MCF 10A (cell line): ENCODE measurements at regions of chr16 and their contacts with region 1.

Region 1: GRCh38 chr16:75110637-75111513 is 5.7 kb downstream of the LDHD start:
- DNase-seq: peak; percentile 92
- H3K4me3 Mint-ChIP-seq: peak overlapping the region; percentile 67
- H3K27ac Mint-ChIP-seq: peak overlapping the region; percentile 76
- H3K4me1 Mint-ChIP-seq: peaks cover 29% of the 10 kb centered on the region
- H3K27me3 Mint-ChIP-seq: no peaks in the 10 kb centered on the region
- CTCF ChIP-seq: peak; percentile 88

Region 2: DNA sequence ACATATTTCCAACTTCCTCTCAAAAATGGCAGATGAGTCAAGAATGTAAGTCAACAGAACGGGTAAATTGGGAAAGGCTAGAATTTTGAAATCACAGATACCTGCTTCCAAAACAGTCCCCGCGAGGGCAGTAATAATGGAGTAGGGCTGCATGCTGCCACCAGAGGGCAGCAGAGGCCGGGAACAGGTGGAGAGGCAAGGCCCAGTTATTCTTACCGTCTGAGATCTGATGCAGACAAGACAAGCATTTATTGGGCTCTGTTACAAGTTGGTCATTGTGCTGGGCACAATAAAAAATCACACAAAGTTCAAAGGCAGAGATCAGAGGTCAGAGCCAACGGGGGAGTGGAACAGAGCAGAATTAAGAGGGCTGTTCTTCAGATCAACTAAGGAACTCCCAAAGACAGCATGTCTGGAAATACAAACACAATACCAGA is 401.4 kb before region 1 on chr16:
- CTCF ChIA-PET with region 1: interaction called, 10 read pairs
- POLR2A ChIA-PET with region 1: no interaction called
- intact Hi-C with region 1: loop called (anchors 1 kb)
- DNase-seq: peak; percentile 91
- H3K4me3 Mint-ChIP-seq: no peak overlapping the region
- H3K27ac Mint-ChIP-seq: no peak overlapping the region
- H3K4me1 Mint-ChIP-seq: no peaks in the 10 kb centered on the region
- H3K27me3 Mint-ChIP-seq: no peaks in the 10 kb centered on the region
- CTCF ChIP-seq: peak; percentile 93

Region 3: GRCh38 chr16:74951681-74952080 is 159.2 kb before region 1 on chr16:
- CTCF ChIA-PET with region 1: interaction called, 11 read pairs
- POLR2A ChIA-PET with region 1: no interaction called
- intact Hi-C with region 1: no loop called
- DNase-seq: no peak
- H3K4me3 Mint-ChIP-seq: no peak overlapping the region
- H3K27ac Mint-ChIP-seq: no peak overlapping the region
- H3K4me1 Mint-ChIP-seq: no peaks in the 10 kb centered on the region
- H3K27me3 Mint-ChIP-seq: no peaks in the 10 kb centered on the region
- CTCF ChIP-seq: no peak

Region 4: GRCh38 chr16:74998481-74999218 is 112.2 kb before region 1 on chr16 and contains the start of gene ZNRF1:
- CTCF ChIA-PET with region 1: interaction called, 199 read pairs
- POLR2A ChIA-PET with region 1: interaction called, 71 read pairs
- intact Hi-C with region 1: loop called (anchors 1 kb)
- DNase-seq: peak; percentile 84
- H3K4me3 Mint-ChIP-seq: peak within 1 kb of the TSS; percentile 73
- H3K27ac Mint-ChIP-seq: no peak within 1 kb of the TSS
- H3K4me1 Mint-ChIP-seq: peaks cover 19% of the 10 kb centered on the region
- H3K27me3 Mint-ChIP-seq: no peaks in the 10 kb centered on the region
- CTCF ChIP-seq: peak; percentile 84
- total RNA-seq, gene ZNRF1: 8.3 and 10.5 TPM in 2 replicates

Region 5: DNA sequence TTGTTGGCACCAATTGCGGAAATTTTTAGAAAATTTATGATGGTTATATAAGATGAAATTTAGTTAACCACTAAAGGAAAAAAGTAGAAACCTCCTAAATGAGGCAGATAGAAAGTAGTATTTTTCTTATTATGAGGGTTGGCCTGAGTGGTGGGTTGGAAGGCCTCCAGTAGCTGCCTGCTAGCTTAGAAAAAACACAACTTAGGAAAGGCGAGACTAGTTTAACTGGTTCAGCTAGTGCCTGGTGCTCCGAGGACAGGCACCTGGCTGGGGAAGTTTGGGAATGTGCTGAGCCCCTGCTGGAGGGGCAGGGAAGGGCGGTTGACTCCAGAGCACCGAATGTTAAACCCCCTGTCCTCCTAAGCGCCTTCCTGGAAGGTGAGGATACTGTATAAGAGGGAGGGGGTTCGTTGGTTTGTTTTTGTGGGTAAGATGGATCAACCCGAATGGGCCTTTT is 14.2 kb before region 1 on chr16:
- CTCF ChIA-PET with region 1: interaction called, 14 read pairs
- POLR2A ChIA-PET with region 1: interaction called, 6 read pairs
- intact Hi-C with region 1: no loop called
- DNase-seq: no peak
- H3K4me3 Mint-ChIP-seq: no peak overlapping the region
- H3K27ac Mint-ChIP-seq: no peak overlapping the region
- H3K4me1 Mint-ChIP-seq: no peaks in the 10 kb centered on the region
- H3K27me3 Mint-ChIP-seq: no peaks in the 10 kb centered on the region
- CTCF ChIP-seq: peak; percentile 17

Region 6: DNA sequence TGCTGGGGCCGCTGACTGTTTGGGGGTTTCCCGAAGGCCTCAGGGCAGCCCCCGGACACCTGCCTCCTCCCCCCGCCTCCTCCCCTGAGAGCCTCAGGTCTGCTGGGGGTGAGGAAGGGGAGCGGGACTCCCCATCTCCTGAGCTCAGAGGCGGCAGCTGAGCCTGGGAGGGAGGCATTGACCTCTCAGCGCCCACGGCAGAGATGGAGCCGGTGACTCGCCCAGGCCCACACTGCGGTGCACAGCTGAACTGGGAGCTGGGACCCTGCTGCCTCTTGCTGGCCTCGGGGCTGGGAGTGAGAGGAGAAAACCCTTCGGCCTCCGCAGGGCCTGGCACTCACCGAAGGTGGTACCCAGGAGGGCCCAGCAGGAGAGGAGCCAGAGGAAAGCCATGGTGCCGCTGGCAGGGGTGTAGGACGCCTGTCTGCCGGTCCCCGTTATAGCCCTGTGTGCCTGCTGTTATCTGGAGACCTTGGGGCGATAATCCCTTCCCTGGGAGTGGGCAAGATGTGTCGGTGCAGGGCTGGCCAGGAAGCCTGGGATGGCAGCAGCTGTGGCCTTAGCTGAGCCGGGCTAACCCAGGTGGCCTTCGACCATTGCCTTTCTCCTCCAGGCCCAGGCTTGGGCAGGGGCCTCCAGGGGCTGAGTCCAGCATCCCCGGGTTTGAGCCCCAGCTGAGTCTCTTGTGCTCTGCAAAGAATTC is 96.0 kb after region 1 on chr16 and contains the start of gene CTRB2:
- CTCF ChIA-PET with region 1: no interaction called
- POLR2A ChIA-PET with region 1: no interaction called
- intact Hi-C with region 1: no loop called
- DNase-seq: no peak
- H3K4me3 Mint-ChIP-seq: no peak within 1 kb of the TSS
- H3K27ac Mint-ChIP-seq: no peak within 1 kb of the TSS
- H3K4me1 Mint-ChIP-seq: no peaks in the 10 kb centered on the region
- H3K27me3 Mint-ChIP-seq: no peaks in the 10 kb centered on the region
- CTCF ChIP-seq: no peak
- total RNA-seq, gene CTRB2: not detected in 2 replicates

Region 7: DNA sequence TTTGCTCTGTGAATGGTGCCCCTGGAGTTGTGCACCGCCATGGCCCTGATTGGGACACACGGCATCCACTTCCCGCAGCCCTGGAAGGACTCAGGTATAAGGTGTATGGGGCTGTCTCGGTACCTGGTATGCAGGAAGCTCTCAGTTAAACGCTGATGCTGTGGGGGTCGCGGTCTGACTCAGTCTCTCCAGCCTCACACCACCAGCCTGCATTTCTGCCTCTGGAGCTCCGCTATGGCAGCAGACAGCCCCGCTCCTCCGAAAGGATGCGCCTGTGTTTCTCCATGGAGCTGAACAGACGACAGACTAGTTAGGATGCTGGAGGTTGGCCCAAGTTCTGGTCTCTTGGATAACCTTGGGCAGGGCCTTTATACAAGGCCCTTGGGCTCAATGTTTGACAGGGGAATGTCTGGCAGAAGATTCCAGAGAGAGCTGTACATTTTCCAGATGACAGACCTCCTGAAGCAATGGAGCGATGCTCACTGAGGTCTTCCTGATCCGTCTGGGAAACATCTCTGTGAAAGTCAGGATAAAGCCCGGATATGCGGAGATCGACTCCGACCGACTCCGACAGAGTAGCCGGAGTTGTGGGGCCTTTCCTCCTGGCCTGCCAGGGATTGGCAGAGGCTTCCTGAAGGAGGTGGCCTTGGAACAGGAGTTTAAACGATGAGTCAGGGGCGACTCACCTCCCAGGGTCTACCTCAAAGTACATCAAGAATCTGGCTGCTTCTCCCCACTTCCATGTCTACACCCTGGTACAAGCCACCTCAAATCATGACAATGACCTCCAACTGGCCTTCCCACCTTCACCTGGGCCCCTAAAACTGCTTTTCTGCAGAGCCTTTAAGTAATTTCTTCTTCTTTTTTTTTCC is 162.4 kb after region 1 on chr16:
- CTCF ChIA-PET with region 1: no interaction called
- POLR2A ChIA-PET with region 1: no interaction called
- intact Hi-C with region 1: no loop called
- DNase-seq: peak; percentile 38
- H3K4me3 Mint-ChIP-seq: no peak overlapping the region
- H3K27ac Mint-ChIP-seq: peak overlapping the region; percentile 12
- H3K4me1 Mint-ChIP-seq: no peaks in the 10 kb centered on the region
- H3K27me3 Mint-ChIP-seq: no peaks in the 10 kb centered on the region
- CTCF ChIP-seq: no peak